K562 (cell line): ENCODE measurements at regions of chr22 and their contacts with region 1.

Region 1: GRCh38 chr22:29369460-29369859 is 18.9 kb downstream of the AP1B1 start:
- DNase-seq: peak in 3 of 4 experiments; percentile 22 to 42 (median 25)
- ATAC-seq: peak; percentile 81
- H3K4me3 ChIP-seq: no peak overlapping the region
- H3K27ac ChIP-seq: peak overlapping the region; percentile 44; the same call in 2 of the 3 replicates
- H3K4me1 ChIP-seq: peaks cover 0 to 3% of the 10 kb centered on the region in 2 experiments; a peak in 3 of 5 replicates
- H3K27me3 ChIP-seq: no peaks in the 10 kb centered on the region
- CTCF ChIP-seq: no peak
- EP300 ChIP-seq: no peak
- POLR2A ChIP-seq: no peak
- RAD21 ChIP-seq: no peak

Region 2: DNA sequence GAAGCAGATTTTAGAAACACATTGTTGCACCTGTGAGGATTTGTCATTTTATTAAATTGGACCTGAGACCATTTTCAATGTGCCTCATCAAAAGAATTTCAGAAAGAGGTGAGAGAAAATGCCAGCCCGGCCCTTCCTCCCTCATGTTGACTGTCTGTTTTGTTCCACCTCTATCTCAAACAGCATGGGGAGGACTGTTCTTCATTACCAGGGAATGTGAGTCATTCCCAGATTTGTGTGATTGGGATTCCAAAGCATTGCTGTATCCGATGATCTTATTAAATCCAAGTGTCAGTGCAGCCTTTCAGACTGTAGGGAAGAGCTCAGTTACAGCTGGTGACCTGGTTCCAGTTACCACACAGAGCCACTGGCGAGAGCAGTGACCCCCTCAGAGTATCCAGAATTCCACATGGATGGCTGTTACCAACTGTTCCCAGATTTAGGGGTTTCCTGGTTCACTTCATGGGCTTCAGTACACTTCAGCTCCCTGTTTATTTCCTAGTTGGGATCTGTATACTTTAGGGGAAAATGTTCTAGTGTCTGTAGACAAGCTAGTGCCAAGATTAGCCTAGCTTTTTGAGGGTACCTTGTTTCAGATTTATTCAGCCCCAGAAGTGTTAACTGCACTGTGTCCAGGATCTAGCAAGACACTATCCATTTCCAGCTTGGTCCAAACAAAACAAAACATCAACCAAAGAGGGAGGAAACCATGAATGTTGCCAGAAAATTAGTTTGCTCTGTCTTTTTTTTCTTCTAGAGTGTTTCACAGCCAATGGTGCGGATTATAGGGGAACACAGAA is 275.8 kb before region 1 on chr22:
- CTCF ChIA-PET with region 1: no interaction called
- POLR2A ChIA-PET with region 1: no interaction called
- in situ Hi-C with region 1: no loop called
- intact Hi-C with region 1: no loop called
- DNase-seq: no peak
- ATAC-seq: no peak
- H3K4me3 ChIP-seq: no peak overlapping the region
- H3K27ac ChIP-seq: no peak overlapping the region
- H3K4me1 ChIP-seq: peaks cover 11 to 33% of the 10 kb centered on the region in 2 experiments; a peak in 4 of 5 replicates
- H3K27me3 ChIP-seq: no peaks in the 10 kb centered on the region
- CTCF ChIP-seq: no peak
- EP300 ChIP-seq: no peak
- POLR2A ChIP-seq: no peak
- RAD21 ChIP-seq: no peak

Region 3: GRCh38 chr22:29391561-29391960 is 22.1 kb after region 1 on chr22:
- CTCF ChIA-PET with region 1: no interaction called
- POLR2A ChIA-PET with region 1: no interaction called
- in situ Hi-C with region 1: no loop called
- intact Hi-C with region 1: no loop called
- DNase-seq: no peak
- ATAC-seq: no peak
- H3K4me3 ChIP-seq: no peak overlapping the region
- H3K27ac ChIP-seq: no peak overlapping the region
- H3K4me1 ChIP-seq: peaks cover 10 to 11% of the 10 kb centered on the region in 2 experiments; a peak in 4 of 5 replicates
- H3K27me3 ChIP-seq: no peaks in the 10 kb centered on the region
- CTCF ChIP-seq: no peak
- EP300 ChIP-seq: no peak
- POLR2A ChIP-seq: no peak
- RAD21 ChIP-seq: no peak

Region 4: DNA sequence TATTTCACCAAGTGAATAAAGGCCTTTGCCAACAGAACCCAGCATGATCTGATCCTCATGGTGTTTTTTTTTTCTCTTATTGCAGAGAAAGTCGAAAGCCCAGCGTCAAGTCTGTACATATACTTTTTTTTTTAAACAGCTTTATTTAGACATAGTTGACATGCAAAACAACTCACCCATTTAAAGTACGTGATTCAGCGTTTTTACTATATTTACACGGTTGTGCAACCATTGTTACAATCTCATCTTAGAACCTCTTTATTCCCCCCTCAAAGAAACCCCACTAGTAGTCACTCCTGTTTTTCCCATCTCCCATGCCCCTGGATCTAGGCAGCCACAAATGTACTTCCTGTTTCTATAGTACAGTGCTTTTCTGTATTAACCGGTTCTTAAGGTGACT is 39.5 kb after region 1 on chr22:
- CTCF ChIA-PET with region 1: no interaction called
- POLR2A ChIA-PET with region 1: no interaction called
- in situ Hi-C with region 1: no loop called
- intact Hi-C with region 1: no loop called
- DNase-seq: no peak
- ATAC-seq: no peak
- H3K4me3 ChIP-seq: no peak overlapping the region
- H3K27ac ChIP-seq: no peak overlapping the region
- H3K4me1 ChIP-seq: no peaks in the 10 kb centered on the region; a peak in 2 of 5 replicates
- H3K27me3 ChIP-seq: no peaks in the 10 kb centered on the region
- CTCF ChIP-seq: no peak
- EP300 ChIP-seq: no peak
- POLR2A ChIP-seq: no peak
- RAD21 ChIP-seq: no peak

Region 5: DNA sequence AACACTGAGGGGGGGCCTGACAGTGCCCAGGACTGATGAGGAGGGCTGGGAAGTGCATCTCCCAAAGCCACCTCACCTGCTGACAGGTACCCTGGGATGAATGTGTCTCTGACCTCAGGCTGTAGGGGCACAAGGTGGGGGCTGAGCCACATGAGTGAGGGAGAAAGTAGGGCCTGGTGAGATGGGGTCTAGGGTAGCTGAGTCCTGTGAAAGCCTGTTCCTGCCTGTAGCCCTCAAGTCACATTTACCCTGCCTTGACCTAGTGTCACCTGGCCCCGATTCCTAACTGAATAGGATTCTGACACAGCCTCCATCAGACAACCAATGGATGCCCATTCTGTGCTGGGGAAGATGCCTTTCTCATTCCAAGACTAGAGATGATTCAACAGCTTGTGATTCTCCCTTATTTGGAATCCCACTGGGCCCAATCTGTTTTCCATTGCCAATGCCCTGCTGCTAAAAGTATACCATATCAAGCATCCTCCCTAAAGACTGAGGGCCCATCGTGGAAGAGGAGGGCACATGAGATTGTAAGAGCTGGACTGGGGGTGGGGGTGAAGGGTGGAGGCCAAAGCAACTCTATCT is 57.8 kb after region 1 on chr22:
- CTCF ChIA-PET with region 1: no interaction called
- POLR2A ChIA-PET with region 1: no interaction called
- in situ Hi-C with region 1: loop called (anchors 5 kb)
- intact Hi-C with region 1: no loop called
- DNase-seq: no peak
- ATAC-seq: no peak
- H3K4me3 ChIP-seq: no peak overlapping the region
- H3K27ac ChIP-seq: no peak overlapping the region
- H3K4me1 ChIP-seq: no peaks in the 10 kb centered on the region; a peak in 1 of 5 replicates
- H3K27me3 ChIP-seq: peaks cover 5 to 6% of the 10 kb centered on the region in 2 experiments; a peak in 2 of 5 replicates
- CTCF ChIP-seq: no peak
- EP300 ChIP-seq: no peak
- POLR2A ChIP-seq: no peak
- RAD21 ChIP-seq: no peak